CD8-positive, alpha-beta T cell (primary cell): ENCODE measurements at regions of chr11 and their contacts with region 1.

Region 1: GRCh38 chr11:96242971-96243647 is 99.9 kb downstream of the MAML2 start:
- DNase-seq: peak; percentile 40 to 87 (median 71)
- ATAC-seq: peak; percentile 87
- H3K4me3 ChIP-seq: peak overlapping the region; percentile 55 to 61
- H3K4me3 Mint-ChIP-seq: peak overlapping the region; percentile 87
- H3K27ac ChIP-seq: peak overlapping the region; percentile 46 to 68
- H3K27ac Mint-ChIP-seq: peak overlapping the region; percentile 86
- H3K4me1 ChIP-seq: peaks cover 54% of the 10 kb centered on the region
- H3K4me1 Mint-ChIP-seq: peaks cover 62% of the 10 kb centered on the region
- H3K27me3 ChIP-seq: no peaks in the 10 kb centered on the region
- H3K27me3 Mint-ChIP-seq: no peaks in the 10 kb centered on the region
- CTCF ChIP-seq: no peak

Region 2: DNA sequence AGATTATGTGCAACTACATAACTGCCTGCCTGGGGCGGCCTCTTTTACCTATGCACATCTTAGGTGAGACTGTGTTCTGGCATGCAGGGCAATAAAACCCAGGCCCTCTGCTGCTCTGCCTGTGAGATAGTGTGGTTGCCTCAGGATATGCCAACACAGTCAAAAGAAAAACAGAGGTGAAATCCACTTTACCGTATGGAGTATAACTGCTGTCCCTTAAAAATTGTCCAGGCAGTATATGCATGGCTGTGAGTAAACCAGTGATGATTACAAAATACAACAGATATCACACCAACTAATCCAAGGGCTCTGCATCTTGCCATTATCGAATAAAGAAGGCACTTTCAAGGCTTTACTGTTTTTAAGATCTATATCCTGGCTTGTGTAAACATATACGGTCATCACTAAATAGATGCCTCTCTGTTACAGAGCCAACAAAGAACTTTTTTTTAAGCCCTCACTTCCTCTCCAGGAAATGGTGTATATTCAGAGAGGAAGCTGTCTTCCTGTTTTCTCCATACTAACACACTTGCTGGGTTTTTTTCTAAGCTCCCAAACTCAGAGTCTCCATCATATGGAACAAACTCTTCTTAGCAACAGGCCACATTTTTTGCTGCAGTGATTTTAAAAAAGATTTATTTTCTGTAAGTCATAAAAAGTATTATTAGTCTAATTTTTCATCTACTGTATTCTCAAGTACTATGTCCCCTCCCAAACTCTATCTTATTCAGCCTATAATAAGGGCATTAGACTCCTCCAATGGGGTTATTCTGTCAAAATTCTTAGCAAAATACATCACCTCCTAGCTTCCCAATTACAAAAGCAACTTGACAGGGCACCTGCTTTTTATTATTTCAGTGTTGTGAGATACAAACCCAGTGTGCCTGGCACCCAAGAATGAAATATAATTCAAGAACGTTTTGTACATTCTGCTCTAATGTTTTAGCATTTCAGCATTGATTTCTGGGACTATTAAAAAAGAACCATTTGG is 35.4 kb before region 1 on chr11:
- CTCF ChIA-PET with region 1: interaction called, 3 read pairs
- POLR2A ChIA-PET with region 1: no interaction called
- intact Hi-C with region 1: loop called in 1 of 2 experiments (anchors 2 kb)
- DNase-seq: peak in 5 of 9 experiments; percentile 20 to 72 (median 43)
- ATAC-seq: peak; percentile 48
- H3K4me3 ChIP-seq: peak overlapping the region; percentile 4 to 26
- H3K4me3 Mint-ChIP-seq: peak overlapping the region; percentile 35
- H3K27ac ChIP-seq: peak overlapping the region; percentile 67 to 76
- H3K27ac Mint-ChIP-seq: peak overlapping the region; percentile 89
- H3K4me1 ChIP-seq: peaks cover 96% of the 10 kb centered on the region
- H3K4me1 Mint-ChIP-seq: peaks cover 84% of the 10 kb centered on the region
- H3K27me3 ChIP-seq: no peaks in the 10 kb centered on the region
- H3K27me3 Mint-ChIP-seq: no peaks in the 10 kb centered on the region
- CTCF ChIP-seq: no peak

Region 3: GRCh38 chr11:96227244-96227643 is 15.9 kb before region 1 on chr11:
- CTCF ChIA-PET with region 1: interaction called, 4 read pairs
- POLR2A ChIA-PET with region 1: interaction called, 8 read pairs
- intact Hi-C with region 1: loop called in 1 of 2 experiments (anchors 2 kb)
- DNase-seq: no peak
- ATAC-seq: no peak
- H3K4me3 ChIP-seq: no peak overlapping the region
- H3K4me3 Mint-ChIP-seq: no peak overlapping the region
- H3K27ac ChIP-seq: no peak overlapping the region
- H3K27ac Mint-ChIP-seq: peak overlapping the region; percentile 79
- H3K4me1 ChIP-seq: peaks cover 72% of the 10 kb centered on the region
- H3K4me1 Mint-ChIP-seq: peaks cover 81% of the 10 kb centered on the region
- H3K27me3 ChIP-seq: no peaks in the 10 kb centered on the region
- H3K27me3 Mint-ChIP-seq: no peaks in the 10 kb centered on the region
- CTCF ChIP-seq: no peak

Region 4: DNA sequence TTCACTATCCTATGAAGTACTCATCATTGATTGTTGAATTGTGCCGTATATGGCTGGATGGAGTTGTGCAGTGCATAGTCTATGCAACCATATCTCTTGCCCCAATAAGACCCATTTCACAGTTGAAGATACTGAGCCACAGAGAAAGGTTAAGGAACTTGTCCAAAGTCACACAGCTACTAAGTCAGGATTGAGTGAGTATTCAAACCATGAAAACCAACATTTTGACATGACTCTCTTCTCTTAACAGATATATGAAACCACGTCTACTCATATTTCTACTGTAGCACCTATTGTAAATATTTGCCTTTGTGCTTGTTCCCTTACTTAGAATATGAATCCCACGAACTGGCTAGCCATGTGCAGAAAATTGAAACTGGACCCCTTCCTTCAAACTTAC is 41.8 kb after region 1 on chr11:
- CTCF ChIA-PET with region 1: no interaction called
- POLR2A ChIA-PET with region 1: interaction called, 3 read pairs
- intact Hi-C with region 1: loop called in 1 of 2 experiments (anchors 5 kb)
- DNase-seq: no peak
- ATAC-seq: no peak
- H3K4me3 ChIP-seq: no peak overlapping the region
- H3K4me3 Mint-ChIP-seq: no peak overlapping the region
- H3K27ac ChIP-seq: no peak overlapping the region
- H3K27ac Mint-ChIP-seq: peak overlapping the region; percentile 37
- H3K4me1 ChIP-seq: peaks cover 56% of the 10 kb centered on the region
- H3K4me1 Mint-ChIP-seq: peaks cover 81% of the 10 kb centered on the region
- H3K27me3 ChIP-seq: no peaks in the 10 kb centered on the region
- H3K27me3 Mint-ChIP-seq: no peaks in the 10 kb centered on the region
- CTCF ChIP-seq: no peak